ENCODE measurements at regions of chr6 and their contacts with region 1.

Region 1: DNA sequence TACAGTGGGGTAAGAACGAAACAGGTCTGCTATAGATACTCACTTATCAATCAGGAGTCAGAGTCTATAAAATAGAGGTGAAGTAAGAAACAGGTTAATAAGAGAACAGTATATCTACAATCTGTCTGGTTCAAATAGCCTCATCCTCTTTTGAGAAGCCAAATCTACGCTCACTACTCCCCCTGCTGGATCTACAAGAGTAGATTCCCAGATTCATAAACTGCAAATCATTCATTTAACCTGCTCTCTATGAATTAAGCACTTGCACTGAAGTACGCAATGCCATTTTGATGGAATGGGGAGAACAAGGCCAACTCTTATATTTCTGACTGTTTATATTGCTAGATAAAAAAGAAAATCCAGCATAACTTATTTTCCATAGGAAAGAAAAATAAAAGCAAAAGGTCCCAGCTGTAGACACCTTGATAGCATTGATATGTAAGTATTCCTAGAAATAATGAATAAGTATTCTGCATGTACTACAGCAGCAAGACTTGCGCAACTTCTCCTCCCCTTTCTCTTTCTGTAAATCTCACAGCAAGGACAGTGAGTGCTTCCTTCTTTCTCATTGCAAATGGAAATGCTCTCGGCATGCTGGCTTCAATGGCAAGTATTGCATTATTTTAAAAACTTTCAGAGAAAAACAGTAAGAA is 92.3 kb downstream of the RFX6 start:
- DNase-seq: peak in 1 of 3 donors; percentile 45
- ATAC-seq: peak; percentile 91 to 96 (median 92)
- H3K4me3 ChIP-seq: no peak overlapping the region
- H3K27ac ChIP-seq: no peak overlapping the region
- H3K4me1 ChIP-seq: no peaks in the 10 kb centered on the region
- H3K27me3 ChIP-seq: no peaks in the 10 kb centered on the region
- CTCF ChIP-seq: peak; percentile 74 to 81 (median 75)
- POLR2A ChIP-seq: no peak

Region 2: GRCh38 chr6:116528780-116529179 is 440.6 kb before region 1 on chr6:
- intact Hi-C with region 1: no loop called
- DNase-seq: no peak
- ATAC-seq: no peak
- H3K4me3 ChIP-seq: no peak overlapping the region
- H3K27ac ChIP-seq: no peak overlapping the region
- H3K4me1 ChIP-seq: no peaks in the 10 kb centered on the region
- H3K27me3 ChIP-seq: no peaks in the 10 kb centered on the region
- CTCF ChIP-seq: no peak
- POLR2A ChIP-seq: no peak

Region 3: GRCh38 chr6:116680975-116681808 is 288.1 kb before region 1 on chr6 and contains the start of gene KPNA5:
- intact Hi-C with region 1: no loop called
- DNase-seq: peak; percentile 89 to 93 (median 90)
- ATAC-seq: peak; percentile 97 to 99 (median 98)
- H3K4me3 ChIP-seq: peak within 1 kb of the TSS; percentile 74 to 86 (median 79)
- H3K27ac ChIP-seq: peak within 1 kb of the TSS; percentile 73 to 86 (median 84)
- H3K4me1 ChIP-seq: no peaks in the 10 kb centered on the region
- H3K27me3 ChIP-seq: no peaks in the 10 kb centered on the region
- CTCF ChIP-seq: no peak
- POLR2A ChIP-seq: peak; percentile 65
- total RNA-seq, gene KPNA5: 0.98 to 2.5 (median 2.0) TPM

Region 4: GRCh38 chr6:116881236-116881635 is 88.1 kb before region 1 on chr6:
- intact Hi-C with region 1: loop called in 1 of 2 experiments (anchors 10 kb)
- DNase-seq: no peak
- ATAC-seq: peak; percentile 42 to 59 (median 56)
- H3K4me3 ChIP-seq: no peak overlapping the region
- H3K27ac ChIP-seq: no peak overlapping the region
- H3K4me1 ChIP-seq: no peaks in the 10 kb centered on the region
- H3K27me3 ChIP-seq: peaks cover 0 to 18% of the 10 kb centered on the region in 2 donors
- CTCF ChIP-seq: peak; percentile 25 to 50 (median 46)
- POLR2A ChIP-seq: no peak

Region 5: DNA sequence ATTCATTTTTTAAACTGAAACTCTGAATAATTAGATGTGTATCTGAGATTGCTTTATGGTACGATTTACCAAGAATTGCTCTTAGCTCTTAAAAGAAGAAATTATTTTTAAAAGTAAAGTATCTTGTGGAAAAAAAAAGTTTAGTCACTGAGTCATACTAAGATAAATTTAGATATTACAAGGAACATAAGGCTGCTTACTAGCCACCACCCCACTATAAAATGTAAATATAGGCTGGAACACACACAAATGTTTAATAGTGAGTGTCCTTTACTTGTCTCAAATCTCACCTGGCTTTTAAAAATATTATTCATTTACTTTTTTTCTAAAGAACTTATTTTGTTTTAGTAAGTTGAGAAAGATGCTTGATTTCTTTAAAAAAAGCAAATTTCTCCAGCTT is 74.7 kb before region 1 on chr6:
- intact Hi-C with region 1: loop called (anchors 10 kb)
- DNase-seq: no peak
- ATAC-seq: no peak
- H3K4me3 ChIP-seq: no peak overlapping the region
- H3K27ac ChIP-seq: no peak overlapping the region
- H3K4me1 ChIP-seq: peaks cover 0 to 6% (median 0%) of the 10 kb centered on the region in 4 donors
- H3K27me3 ChIP-seq: no peaks in the 10 kb centered on the region
- CTCF ChIP-seq: no peak
- POLR2A ChIP-seq: no peak

Measured in right lobe of liver (tissue), 6 donors.